ENCODE measurements at regions of chr5 and their contacts with region 1.

Region 1: DNA sequence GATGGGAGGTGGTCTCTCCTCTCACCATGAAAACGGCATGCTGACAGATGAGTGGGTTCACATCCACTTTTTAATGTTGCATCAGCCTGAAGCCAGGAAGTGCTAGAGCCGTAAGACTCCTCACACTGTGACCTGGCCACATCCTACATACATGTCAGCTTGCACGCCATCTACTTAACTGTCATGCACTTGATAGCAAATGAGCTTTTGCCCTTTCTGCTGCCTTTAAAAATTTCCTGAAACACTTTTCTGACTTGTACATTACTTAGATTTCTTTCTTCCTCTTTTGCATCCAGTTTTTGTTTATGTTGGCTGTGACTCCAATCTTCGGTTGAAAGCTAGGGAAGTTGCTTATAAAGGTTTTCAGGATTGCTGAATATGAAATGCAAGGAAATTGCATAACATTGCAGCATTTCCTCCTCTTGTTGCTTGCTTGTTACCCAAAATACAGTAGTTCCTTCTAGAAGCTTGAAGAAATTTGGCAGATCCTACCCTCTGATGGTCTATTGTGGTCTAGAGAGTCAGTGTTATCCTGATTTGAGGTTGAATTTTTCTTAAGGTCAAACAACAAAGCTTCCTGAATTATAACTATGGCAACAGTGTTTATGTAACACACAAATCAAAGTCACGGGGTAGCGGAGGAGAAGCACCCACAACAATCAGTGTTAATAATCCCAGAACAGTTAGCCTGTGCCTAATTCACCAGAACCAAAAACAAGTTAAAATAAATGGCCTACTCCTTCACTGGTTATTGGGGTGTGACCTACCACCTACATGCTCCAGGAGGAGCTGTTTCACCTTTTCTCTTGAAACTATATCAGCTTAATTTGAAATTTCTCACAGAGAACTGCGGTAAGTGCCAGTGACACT is 232.5 kb downstream of the ARHGAP26 start:
- DNase-seq: peak; percentile 93 to 100 (median 98)
- H3K4me3 ChIP-seq: peak overlapping the region in 1 of 3 experiments; percentile 25
- H3K4me3 Mint-ChIP-seq: peak overlapping the region; percentile 54 to 78
- H3K27ac ChIP-seq: peak overlapping the region; percentile 98 to 100
- H3K27ac Mint-ChIP-seq: peak overlapping the region; percentile 97 to 99 (median 99)
- H3K4me1 ChIP-seq: peaks cover 83 to 92% of the 10 kb centered on the region in 2 donors
- H3K4me1 Mint-ChIP-seq: peaks cover 92% of the 10 kb centered on the region
- H3K27me3 ChIP-seq: no peaks in the 10 kb centered on the region
- H3K27me3 Mint-ChIP-seq: no peaks in the 10 kb centered on the region
- CTCF ChIP-seq: peak; percentile 36

Region 2: GRCh38 chr5:142800776-142801494 is 201.8 kb before region 1 on chr5:
- intact Hi-C with region 1: loop called in 1 of 2 experiments (anchors 10 kb)
- DNase-seq: peak; percentile 52 to 67 (median 52)
- H3K4me3 ChIP-seq: peak overlapping the region in 1 of 3 experiments; percentile 15
- H3K4me3 Mint-ChIP-seq: peak overlapping the region; percentile 43 to 53
- H3K27ac ChIP-seq: peak overlapping the region; percentile 97 to 98
- H3K27ac Mint-ChIP-seq: peak overlapping the region; percentile 98 to 100 (median 99)
- H3K4me1 ChIP-seq: peaks cover 97 to 99% of the 10 kb centered on the region in 2 donors
- H3K4me1 Mint-ChIP-seq: peaks cover 97% of the 10 kb centered on the region
- H3K27me3 ChIP-seq: no peaks in the 10 kb centered on the region
- H3K27me3 Mint-ChIP-seq: peaks cover 0 to 6% (median 2%) of the 10 kb centered on the region in 3 donors
- CTCF ChIP-seq: no peak

Region 3: DNA sequence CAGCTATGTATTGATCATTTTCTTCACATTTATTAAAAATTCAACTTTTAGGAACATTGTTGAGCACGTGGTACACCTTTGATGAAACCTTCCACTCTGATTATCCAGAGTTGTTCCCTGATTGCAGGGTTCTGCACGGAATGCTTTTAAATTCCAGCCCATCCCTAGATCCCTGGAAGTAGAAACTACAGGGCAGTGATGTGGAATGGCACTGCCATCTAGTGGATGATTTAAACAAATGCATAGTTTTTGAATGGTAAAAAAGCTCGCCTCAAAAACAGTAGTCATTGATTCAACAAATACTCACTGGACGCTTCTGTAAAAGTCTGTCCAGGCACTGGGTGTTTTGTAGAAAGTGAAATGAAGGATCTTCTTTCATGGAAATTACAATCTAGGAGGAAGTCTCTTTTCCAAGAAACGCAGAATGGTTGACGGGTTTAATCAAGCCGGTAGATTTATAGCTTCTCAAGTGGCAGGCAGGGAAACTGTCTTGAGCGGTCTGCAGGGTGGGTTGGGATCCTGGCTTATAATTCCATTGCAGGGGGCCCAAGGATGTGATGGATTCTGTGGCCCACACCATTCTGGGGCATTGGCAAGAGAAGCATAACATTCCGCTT is 114.1 kb before region 1 on chr5:
- intact Hi-C with region 1: no loop called
- DNase-seq: peak in 2 of 3 donors; percentile 35 to 48
- H3K4me3 ChIP-seq: no peak overlapping the region
- H3K4me3 Mint-ChIP-seq: no peak overlapping the region
- H3K27ac ChIP-seq: no peak overlapping the region
- H3K27ac Mint-ChIP-seq: peak overlapping the region in 1 of 7 donors; percentile 69
- H3K4me1 ChIP-seq: peaks cover 0 to 3% of the 10 kb centered on the region in 2 donors
- H3K4me1 Mint-ChIP-seq: peaks cover 10% of the 10 kb centered on the region
- H3K27me3 ChIP-seq: no peaks in the 10 kb centered on the region
- H3K27me3 Mint-ChIP-seq: no peaks in the 10 kb centered on the region
- CTCF ChIP-seq: peak; percentile 82

Region 4: DNA sequence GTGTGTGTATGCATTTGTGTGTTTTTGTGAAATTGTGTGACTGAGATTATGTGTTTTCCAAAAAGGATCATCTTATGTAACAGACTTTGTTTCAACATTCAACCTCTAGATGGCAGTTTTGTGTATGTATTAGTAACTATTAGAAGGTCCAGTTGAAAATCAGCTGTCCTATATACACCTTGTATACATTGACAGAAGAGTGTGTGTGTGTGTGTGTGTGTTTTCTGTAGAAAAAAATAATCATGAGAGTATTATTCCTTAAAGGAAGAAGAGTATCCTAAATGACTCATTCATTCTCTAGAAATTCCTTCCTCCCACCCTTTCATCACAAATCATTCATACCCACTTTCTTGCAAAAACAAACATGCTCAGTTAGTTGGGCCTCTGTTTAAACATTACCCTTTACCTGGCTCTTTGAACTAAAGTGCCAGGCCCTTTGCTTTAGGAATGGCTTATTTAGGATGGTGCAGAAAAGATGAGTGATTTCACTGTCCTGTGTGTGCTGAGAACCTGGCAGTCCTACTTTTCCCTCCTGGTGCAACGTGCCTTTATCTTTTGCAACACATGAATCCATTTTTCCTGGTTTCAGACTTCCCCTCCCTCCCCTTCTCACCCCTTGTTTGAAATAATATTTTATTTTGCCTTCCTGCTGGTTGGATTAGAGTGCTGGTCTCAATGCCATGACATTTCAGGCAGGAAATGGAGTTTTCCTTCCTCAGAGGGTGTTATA is 80.3 kb before region 1 on chr5:
- intact Hi-C with region 1: loop called in 1 of 2 experiments (anchors 5 kb)
- DNase-seq: peak in 2 of 3 donors; percentile 37 to 41
- H3K4me3 ChIP-seq: no peak overlapping the region
- H3K4me3 Mint-ChIP-seq: no peak overlapping the region
- H3K27ac ChIP-seq: no peak overlapping the region
- H3K27ac Mint-ChIP-seq: peak overlapping the region in 4 of 7 donors; percentile 28 to 62 (median 51)
- H3K4me1 ChIP-seq: peaks cover 31 to 42% of the 10 kb centered on the region in 2 donors
- H3K4me1 Mint-ChIP-seq: peaks cover 44% of the 10 kb centered on the region
- H3K27me3 ChIP-seq: no peaks in the 10 kb centered on the region
- H3K27me3 Mint-ChIP-seq: peaks cover 0 to 3% (median 0%) of the 10 kb centered on the region in 3 donors
- CTCF ChIP-seq: peak; percentile 63

Region 5: DNA sequence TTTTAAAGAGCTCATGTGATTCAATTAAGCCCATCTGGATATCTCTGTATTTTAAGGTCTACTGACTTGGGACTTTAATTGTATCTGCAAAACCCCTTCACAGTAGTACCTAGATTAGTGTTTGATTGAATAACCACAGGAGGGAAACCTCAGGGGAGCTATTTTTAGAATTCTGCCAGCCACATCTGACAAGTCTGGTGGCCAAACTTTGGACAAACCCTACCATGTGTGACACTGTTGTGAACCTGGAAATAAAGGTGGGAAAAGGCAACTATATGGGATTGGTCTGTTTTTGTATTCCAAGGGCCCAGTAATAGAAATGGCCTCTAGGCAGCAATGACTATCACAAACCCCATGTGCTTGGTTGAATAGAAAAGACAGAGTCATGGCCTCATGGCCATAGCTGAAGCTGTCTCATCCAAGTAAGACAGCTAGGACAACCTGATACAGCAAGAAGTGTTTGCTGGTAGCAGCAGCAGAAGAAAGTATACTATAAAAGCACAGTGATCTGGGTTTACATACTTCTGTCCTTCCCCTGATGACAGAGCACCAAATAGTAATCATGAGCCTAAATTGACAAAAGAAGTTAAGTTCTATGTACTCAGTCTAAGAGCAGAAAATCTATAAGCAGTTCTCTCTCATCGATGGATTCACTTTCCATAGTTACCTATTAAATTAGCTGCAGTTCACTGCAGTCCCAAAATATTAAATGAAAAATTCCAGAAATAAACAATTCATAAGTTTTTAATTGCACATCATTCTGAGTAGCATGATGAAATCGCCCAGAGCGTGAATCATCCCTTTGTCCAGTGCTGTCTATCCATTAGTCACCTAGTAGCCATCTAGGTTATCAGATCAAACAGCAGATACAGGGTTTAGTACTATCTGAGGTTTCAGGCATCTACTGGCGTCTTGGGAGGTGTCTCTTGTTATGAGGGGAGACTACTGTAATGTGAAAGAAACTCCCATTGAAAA is 42.7 kb before region 1 on chr5:
- intact Hi-C with region 1: loop called in 1 of 2 experiments (anchors 10 kb)
- DNase-seq: peak; percentile 51 to 86 (median 84)
- H3K4me3 ChIP-seq: no peak overlapping the region
- H3K4me3 Mint-ChIP-seq: no peak overlapping the region
- H3K27ac ChIP-seq: peak overlapping the region in 1 of 2 donors; percentile 50
- H3K27ac Mint-ChIP-seq: peak overlapping the region; percentile 31 to 81 (median 69)
- H3K4me1 ChIP-seq: peaks cover 0 to 18% of the 10 kb centered on the region in 2 donors
- H3K4me1 Mint-ChIP-seq: peaks cover 32% of the 10 kb centered on the region
- H3K27me3 ChIP-seq: no peaks in the 10 kb centered on the region
- H3K27me3 Mint-ChIP-seq: peaks cover 0 to 4% (median 1%) of the 10 kb centered on the region in 3 donors
- CTCF ChIP-seq: no peak

Region 6: DNA sequence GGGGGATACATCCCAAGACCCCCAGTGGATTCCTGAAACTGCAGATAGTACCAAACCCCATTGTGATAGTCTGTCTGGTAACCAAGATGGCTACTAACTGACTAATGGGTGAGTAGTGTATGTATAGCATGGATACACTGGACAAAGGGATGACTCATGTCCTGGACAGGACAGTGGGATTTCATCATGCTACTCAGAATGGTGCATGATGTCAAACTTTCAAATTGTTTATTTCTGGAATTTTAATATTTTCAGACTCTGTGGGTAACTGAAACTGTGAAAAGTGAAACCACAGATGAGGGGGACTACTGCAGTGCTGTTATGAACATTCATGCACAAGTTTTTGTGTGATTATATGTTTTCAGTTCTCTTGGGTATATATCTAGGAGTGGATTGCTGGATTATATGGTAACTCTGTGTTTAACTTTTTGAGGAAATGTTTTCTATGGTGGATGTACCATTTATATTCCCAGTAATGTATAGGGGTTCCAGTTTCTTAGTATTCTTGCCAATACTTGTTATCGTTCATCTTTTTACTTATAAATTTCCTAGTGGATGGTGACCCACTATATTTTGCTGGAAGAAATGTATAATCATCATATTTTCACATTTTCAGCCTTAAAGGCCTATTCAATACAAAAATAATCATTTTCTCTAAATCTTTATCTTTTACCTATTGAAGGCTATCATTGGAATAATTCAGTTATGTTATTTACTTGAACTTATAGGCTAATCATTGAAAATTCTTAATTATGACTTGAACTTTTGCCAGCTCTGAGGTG is 259.9 kb after region 1 on chr5:
- intact Hi-C with region 1: loop called in 1 of 2 experiments (anchors 10 kb)
- DNase-seq: peak; percentile 67 to 93 (median 82)
- H3K4me3 ChIP-seq: no peak overlapping the region
- H3K4me3 Mint-ChIP-seq: no peak overlapping the region
- H3K27ac ChIP-seq: peak overlapping the region in 1 of 2 donors; percentile 71
- H3K27ac Mint-ChIP-seq: peak overlapping the region; percentile 76 to 91 (median 87)
- H3K4me1 ChIP-seq: peaks cover 3 to 10% of the 10 kb centered on the region in 2 donors
- H3K4me1 Mint-ChIP-seq: peaks cover 18% of the 10 kb centered on the region
- H3K27me3 ChIP-seq: no peaks in the 10 kb centered on the region
- H3K27me3 Mint-ChIP-seq: no peaks in the 10 kb centered on the region
- CTCF ChIP-seq: no peak

Measured in CD14-positive monocyte (primary cell).